CD4-positive, alpha-beta T cell (primary cell): ENCODE measurements at regions of chr10 and their contacts with region 1.

Region 1: DNA sequence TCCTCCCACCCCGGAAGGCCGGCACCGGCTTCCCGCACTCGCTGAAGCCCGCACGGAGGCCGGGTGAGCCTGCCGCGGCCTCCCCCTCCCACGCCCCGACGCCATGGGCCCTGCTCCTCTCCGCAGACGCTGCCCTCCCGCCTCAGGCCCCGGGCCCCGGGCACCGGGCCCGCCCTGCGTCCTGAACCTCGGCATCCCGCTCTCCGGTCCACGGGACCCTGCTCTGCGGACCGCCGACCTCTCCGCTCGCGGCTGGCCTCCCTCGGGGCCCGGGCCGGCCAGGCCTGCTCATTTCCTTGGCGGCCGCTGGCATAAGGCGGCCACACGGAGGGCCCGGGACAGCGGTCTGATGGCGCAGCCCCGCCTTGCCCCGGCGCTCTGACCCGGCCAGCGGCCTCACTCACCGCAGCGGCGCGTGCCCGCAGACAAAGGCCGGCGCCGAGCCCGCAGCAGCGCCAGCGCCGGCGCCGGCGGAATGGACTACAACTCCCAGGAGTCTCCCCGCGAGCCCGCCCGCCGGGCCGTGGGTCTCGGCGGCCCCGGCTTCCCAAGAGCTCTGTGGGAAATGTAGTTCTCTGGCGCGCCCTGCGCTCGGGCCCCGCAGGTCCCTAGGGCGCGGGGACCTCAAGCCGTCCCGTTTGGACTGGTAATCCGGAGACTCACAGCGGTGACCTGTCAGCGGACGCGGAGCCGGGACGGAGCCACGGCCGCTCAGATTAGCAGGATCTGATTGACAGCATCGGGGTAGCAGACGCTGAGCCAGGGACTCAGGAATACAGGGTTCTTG is at the start of gene ZNF32:
- DNase-seq: peak; percentile 64 to 91 (median 76)
- ATAC-seq: peak; percentile 98
- H3K4me3 ChIP-seq: peak within 1 kb of the TSS; percentile 73
- H3K4me3 Mint-ChIP-seq: peak within 1 kb of the TSS; percentile 96
- H3K27ac ChIP-seq: peak within 1 kb of the TSS in 1 of 2 donors; percentile 71
- H3K27ac Mint-ChIP-seq: peak within 1 kb of the TSS; percentile 96
- H3K4me1 ChIP-seq: peaks cover 17% of the 10 kb centered on the region
- H3K4me1 Mint-ChIP-seq: peaks cover 27% of the 10 kb centered on the region
- H3K27me3 ChIP-seq: no peaks in the 10 kb centered on the region
- H3K27me3 Mint-ChIP-seq: peaks cover 3% of the 10 kb centered on the region
- CTCF ChIP-seq: no peak
- total RNA-seq, gene ZNF32: 18.7 to 19.5 TPM

Region 2: GRCh38 chr10:42552493-42553407 is 1095.8 kb before region 1 on chr10:
- CTCF ChIA-PET with region 1: no interaction called
- POLR2A ChIA-PET with region 1: no interaction called
- intact Hi-C with region 1: loop called in 1 of 2 experiments (anchors 5 kb)
- DNase-seq: peak; percentile 87 to 97 (median 94)
- ATAC-seq: peak; percentile 95
- H3K4me3 ChIP-seq: peak overlapping the region; percentile 85
- H3K4me3 Mint-ChIP-seq: peak overlapping the region; percentile 94
- H3K27ac ChIP-seq: peak overlapping the region; percentile 58 to 75
- H3K27ac Mint-ChIP-seq: peak overlapping the region; percentile 87
- H3K4me1 ChIP-seq: peaks cover 23% of the 10 kb centered on the region
- H3K4me1 Mint-ChIP-seq: peaks cover 46% of the 10 kb centered on the region
- H3K27me3 ChIP-seq: no peaks in the 10 kb centered on the region
- H3K27me3 Mint-ChIP-seq: no peaks in the 10 kb centered on the region
- CTCF ChIP-seq: no peak

Region 3: DNA sequence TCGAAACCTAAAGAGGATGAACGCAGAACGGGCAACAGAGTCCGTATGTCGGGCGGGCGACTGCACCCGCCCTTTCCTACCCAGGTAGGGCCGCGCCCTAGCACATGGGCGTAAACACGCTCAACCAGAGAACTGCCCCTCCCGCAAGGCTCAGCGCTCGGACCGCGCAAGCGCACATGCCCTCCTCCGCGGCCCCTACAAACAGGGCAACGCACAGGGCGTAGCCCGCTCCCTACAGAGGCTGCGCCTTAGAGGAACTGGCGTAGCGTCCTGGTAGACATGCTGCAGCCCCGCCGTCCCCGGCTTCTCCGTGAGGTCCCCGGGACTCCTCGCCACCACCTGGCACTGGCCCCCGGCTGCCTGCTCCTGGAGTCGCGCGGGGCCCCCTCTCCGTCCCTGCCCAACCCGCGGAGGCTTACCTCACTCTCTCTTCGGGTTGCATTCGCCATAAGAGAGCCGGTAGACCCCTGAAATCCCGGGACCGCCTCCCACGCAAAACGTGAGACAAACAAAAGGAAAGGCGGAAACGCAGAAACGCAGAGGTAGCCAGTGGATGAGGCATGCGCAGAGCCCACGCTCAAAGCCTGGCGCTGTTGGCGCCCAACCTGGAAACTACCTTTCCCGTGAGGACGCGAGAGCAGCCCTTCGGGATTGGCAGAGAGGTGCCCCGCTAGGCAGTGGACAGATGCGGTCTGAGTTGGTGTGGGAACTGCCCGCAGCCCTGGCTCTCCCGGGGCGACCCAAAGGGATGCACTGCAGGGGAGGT is 1010.4 kb before region 1 on chr10 and contains the start of gene ZNF33B:
- CTCF ChIA-PET with region 1: no interaction called
- POLR2A ChIA-PET with region 1: interaction called, 3 read pairs
- intact Hi-C with region 1: loop called in 1 of 2 experiments (anchors 5 kb)
- DNase-seq: peak; percentile 89 to 97 (median 94)
- ATAC-seq: peak; percentile 91
- H3K4me3 ChIP-seq: peak within 1 kb of the TSS; percentile 71
- H3K4me3 Mint-ChIP-seq: peak within 1 kb of the TSS; percentile 96
- H3K27ac ChIP-seq: peak within 1 kb of the TSS; percentile 91 to 92
- H3K27ac Mint-ChIP-seq: peak within 1 kb of the TSS; percentile 97
- H3K4me1 ChIP-seq: peaks cover 18% of the 10 kb centered on the region
- H3K4me1 Mint-ChIP-seq: peaks cover 52% of the 10 kb centered on the region
- H3K27me3 ChIP-seq: no peaks in the 10 kb centered on the region
- H3K27me3 Mint-ChIP-seq: no peaks in the 10 kb centered on the region
- CTCF ChIP-seq: no peak
- total RNA-seq, gene ZNF33B: 26.6 to 27.0 TPM

Region 4: DNA sequence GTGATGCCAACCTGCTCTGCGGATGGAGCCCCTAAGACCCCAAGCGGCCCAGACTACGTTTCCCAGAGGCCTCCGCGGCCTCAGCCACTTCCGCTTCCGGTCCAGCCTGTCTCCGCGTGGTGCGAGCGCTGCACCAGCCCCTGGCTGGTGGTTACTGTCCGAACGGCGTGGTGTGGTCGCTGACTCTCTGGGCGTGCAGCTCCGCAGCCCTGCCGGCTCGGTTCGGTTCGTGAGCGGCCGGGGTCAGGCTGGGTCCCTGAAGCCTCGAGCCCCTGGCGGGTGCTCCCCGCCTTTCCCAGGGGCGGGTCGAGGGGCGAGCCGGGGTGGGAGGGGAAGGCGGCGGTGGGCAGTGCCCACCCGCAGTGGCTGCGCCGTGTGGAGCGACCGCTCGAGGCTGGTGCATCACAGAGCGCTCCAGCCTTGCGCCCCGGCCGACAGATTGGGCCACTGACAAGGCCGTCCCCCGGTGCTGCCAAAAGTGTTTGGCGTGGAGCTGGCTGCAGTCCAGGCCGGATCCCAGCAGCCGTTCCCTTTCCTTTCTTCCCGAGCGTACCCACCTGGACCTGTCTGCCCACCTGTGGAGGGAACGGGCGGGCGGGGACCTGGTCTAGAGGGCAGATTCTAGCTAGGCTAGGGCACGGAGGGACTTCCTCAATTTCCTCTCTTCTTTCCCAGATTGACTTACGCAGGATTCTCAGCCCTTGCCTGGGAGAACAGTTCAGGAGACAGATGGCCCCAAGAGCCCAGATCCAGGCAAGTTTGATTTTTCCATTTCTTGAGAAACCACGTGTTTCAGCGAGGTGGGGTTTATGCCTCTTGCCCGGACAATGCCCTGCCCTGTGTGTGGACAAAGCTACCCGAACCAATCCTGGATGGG is 42.0 kb before region 1 on chr10 and contains the start of gene ZNF485:
- CTCF ChIA-PET with region 1: no interaction called
- POLR2A ChIA-PET with region 1: interaction called, 5 read pairs
- intact Hi-C with region 1: loop called in 1 of 2 experiments (anchors 1 kb)
- DNase-seq: peak; percentile 42 to 77 (median 60)
- ATAC-seq: peak; percentile 87
- H3K4me3 ChIP-seq: peak within 1 kb of the TSS; percentile 81
- H3K4me3 Mint-ChIP-seq: peak within 1 kb of the TSS; percentile 89
- H3K27ac ChIP-seq: no peak within 1 kb of the TSS
- H3K27ac Mint-ChIP-seq: peak within 1 kb of the TSS; percentile 47
- H3K4me1 ChIP-seq: peaks cover 15% of the 10 kb centered on the region
- H3K4me1 Mint-ChIP-seq: peaks cover 41% of the 10 kb centered on the region
- H3K27me3 ChIP-seq: no peaks in the 10 kb centered on the region
- H3K27me3 Mint-ChIP-seq: no peaks in the 10 kb centered on the region
- CTCF ChIP-seq: no peak
- total RNA-seq, gene ZNF485: 0.75 to 1.2 TPM